ENCODE measurements at regions of chr12 and their contacts with region 1.

Region 1: GRCh38 chr12:1690578-1691122 is at the start of gene ADIPOR2:
- DNase-seq: peak; percentile 93 to 95 (median 94)
- H3K4me3 ChIP-seq: peak within 1 kb of the TSS; percentile 70 to 87
- H3K4me3 Mint-ChIP-seq: peak within 1 kb of the TSS; percentile 88 to 97 (median 93)
- H3K27ac ChIP-seq: peak within 1 kb of the TSS; percentile 73
- H3K27ac Mint-ChIP-seq: peak within 1 kb of the TSS; percentile 96 to 99 (median 99)
- H3K4me1 ChIP-seq: peaks cover 27% of the 10 kb centered on the region
- H3K4me1 Mint-ChIP-seq: peaks cover 26 to 53% (median 35%) of the 10 kb centered on the region in 4 donors
- H3K27me3 ChIP-seq: no peaks in the 10 kb centered on the region
- H3K27me3 Mint-ChIP-seq: peaks cover 0 to 1% of the 10 kb centered on the region in 2 donors
- total RNA-seq, gene ADIPOR2: 35.7 to 36.2 TPM

Region 2: GRCh38 chr12:1661553-1662335 is 28.9 kb before region 1 on chr12:
- CTCF ChIA-PET with region 1: interaction called, 9 read pairs
- POLR2A ChIA-PET with region 1: interaction called, 32 read pairs
- intact Hi-C with region 1: loop called (anchors 1 kb)
- DNase-seq: peak; percentile 84 to 92 (median 90)
- H3K4me3 ChIP-seq: peak overlapping the region in 1 of 2 donors; percentile 49
- H3K4me3 Mint-ChIP-seq: peak overlapping the region; percentile 72 to 84 (median 82)
- H3K27ac ChIP-seq: no peak overlapping the region
- H3K27ac Mint-ChIP-seq: peak overlapping the region; percentile 88 to 93 (median 91)
- H3K4me1 ChIP-seq: peaks cover 16% of the 10 kb centered on the region
- H3K4me1 Mint-ChIP-seq: peaks cover 22 to 55% (median 29%) of the 10 kb centered on the region in 4 donors
- H3K27me3 ChIP-seq: no peaks in the 10 kb centered on the region
- H3K27me3 Mint-ChIP-seq: no peaks in the 10 kb centered on the region

Region 3: GRCh38 chr12:1972856-1973317 is 282.2 kb after region 1 on chr12:
- CTCF ChIA-PET with region 1: no interaction called
- POLR2A ChIA-PET with region 1: no interaction called
- intact Hi-C with region 1: no loop called
- DNase-seq: no peak
- H3K4me3 ChIP-seq: no peak overlapping the region
- H3K4me3 Mint-ChIP-seq: no peak overlapping the region
- H3K27ac ChIP-seq: no peak overlapping the region
- H3K27ac Mint-ChIP-seq: no peak overlapping the region
- H3K4me1 ChIP-seq: no peaks in the 10 kb centered on the region
- H3K4me1 Mint-ChIP-seq: peaks cover 0 to 14% (median 8%) of the 10 kb centered on the region in 4 donors
- H3K27me3 ChIP-seq: no peaks in the 10 kb centered on the region
- H3K27me3 Mint-ChIP-seq: no peaks in the 10 kb centered on the region